B cell (primary cell): ENCODE measurements at regions of chr7 and their contacts with region 1.

Region 1: DNA sequence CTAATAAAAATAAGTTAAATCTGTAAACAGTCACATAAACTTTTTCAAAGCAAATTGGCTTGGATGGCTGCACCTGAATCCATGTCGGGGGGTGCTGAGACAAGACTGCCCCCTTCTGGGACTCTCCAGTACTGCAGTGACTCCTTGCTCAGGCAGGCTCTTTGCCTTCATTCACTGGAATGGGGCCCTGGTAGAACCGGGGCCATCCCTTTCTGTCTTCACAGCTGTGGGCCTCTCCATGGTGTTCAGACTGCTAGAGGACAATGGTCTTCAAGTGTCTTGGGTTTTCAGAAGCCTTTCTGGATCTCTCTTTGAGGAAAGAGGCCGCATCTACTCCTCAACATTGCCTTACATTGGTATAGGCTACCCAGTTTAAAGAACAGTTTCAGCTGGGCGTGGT is 16.1 kb upstream of the IMPDH1 start:
- DNase-seq: peak; percentile 71
- ATAC-seq: peak; percentile 69
- H3K4me3 ChIP-seq: no peak overlapping the region
- H3K4me3 Mint-ChIP-seq: no peak overlapping the region
- H3K27ac ChIP-seq: no peak overlapping the region
- H3K27ac Mint-ChIP-seq: no peak overlapping the region
- H3K4me1 ChIP-seq: no peaks in the 10 kb centered on the region
- H3K4me1 Mint-ChIP-seq: no peaks in the 10 kb centered on the region
- H3K27me3 ChIP-seq: no peaks in the 10 kb centered on the region
- H3K27me3 Mint-ChIP-seq: no peaks in the 10 kb centered on the region
- CTCF ChIP-seq: peak; percentile 76

Region 2: GRCh38 chr7:128387216-128388144 is 38.4 kb before region 1 on chr7:
- CTCF ChIA-PET with region 1: interaction called, 21 read pairs
- POLR2A ChIA-PET with region 1: no interaction called
- intact Hi-C with region 1: no loop called
- DNase-seq: peak; percentile 71
- ATAC-seq: peak; percentile 89
- H3K4me3 ChIP-seq: no peak overlapping the region
- H3K4me3 Mint-ChIP-seq: no peak overlapping the region
- H3K27ac ChIP-seq: no peak overlapping the region
- H3K27ac Mint-ChIP-seq: no peak overlapping the region
- H3K4me1 ChIP-seq: peaks cover 0 to 7% of the 10 kb centered on the region in 2 donors
- H3K4me1 Mint-ChIP-seq: peaks cover 6% of the 10 kb centered on the region
- H3K27me3 ChIP-seq: peaks cover 0 to 11% (median 3%) of the 10 kb centered on the region in 4 experiments
- H3K27me3 Mint-ChIP-seq: no peaks in the 10 kb centered on the region
- CTCF ChIP-seq: peak; percentile 86

Region 3: GRCh38 chr7:128409596-128410160 is 16.2 kb before region 1 on chr7 and contains the start of gene IMPDH1:
- CTCF ChIA-PET with region 1: interaction called, 331 read pairs
- POLR2A ChIA-PET with region 1: no interaction called
- intact Hi-C with region 1: loop called (anchors 1 kb)
- DNase-seq: peak; percentile 91
- ATAC-seq: peak; percentile 81
- H3K4me3 ChIP-seq: peak within 1 kb of the TSS; percentile 73 to 93 (median 86)
- H3K4me3 Mint-ChIP-seq: peak within 1 kb of the TSS; percentile 95
- H3K27ac ChIP-seq: peak within 1 kb of the TSS; percentile 64 to 68
- H3K27ac Mint-ChIP-seq: peak within 1 kb of the TSS; percentile 86
- H3K4me1 ChIP-seq: peaks cover 19 to 53% of the 10 kb centered on the region in 2 donors
- H3K4me1 Mint-ChIP-seq: peaks cover 38% of the 10 kb centered on the region
- H3K27me3 ChIP-seq: peaks cover 0 to 1% (median 0%) of the 10 kb centered on the region in 4 experiments
- H3K27me3 Mint-ChIP-seq: peaks cover 4% of the 10 kb centered on the region
- CTCF ChIP-seq: no peak
- total RNA-seq, gene IMPDH1: 52.3 and 54.9 TPM in 2 replicates

Region 4: GRCh38 chr7:128443831-128444600 is 18.2 kb after region 1 on chr7:
- CTCF ChIA-PET with region 1: interaction called, 133 read pairs
- POLR2A ChIA-PET with region 1: interaction called, 3 read pairs
- intact Hi-C with region 1: no loop called
- DNase-seq: no peak
- ATAC-seq: peak; percentile 14
- H3K4me3 ChIP-seq: no peak overlapping the region
- H3K4me3 Mint-ChIP-seq: no peak overlapping the region
- H3K27ac ChIP-seq: no peak overlapping the region
- H3K27ac Mint-ChIP-seq: peak overlapping the region; percentile 41
- H3K4me1 ChIP-seq: peaks cover 3 to 11% of the 10 kb centered on the region in 2 donors
- H3K4me1 Mint-ChIP-seq: peaks cover 11% of the 10 kb centered on the region
- H3K27me3 ChIP-seq: no peaks in the 10 kb centered on the region
- H3K27me3 Mint-ChIP-seq: no peaks in the 10 kb centered on the region
- CTCF ChIP-seq: no peak